ENCODE measurements at regions of chr20 and their contacts with region 1.

Region 1: GRCh38 chr20:40689943-40690835 is 1.2 kb upstream of the MAFB start:
- DNase-seq: peak; percentile 95
- H3K4me3 ChIP-seq: peak overlapping the region; percentile 52 to 87 (median 64)
- H3K27ac ChIP-seq: peak overlapping the region; percentile 38 to 94 (median 90)
- H3K4me1 ChIP-seq: peaks cover 0 to 63% (median 41%) of the 10 kb centered on the region in 6 donors
- H3K27me3 ChIP-seq: peaks cover 0 to 100% (median 62%) of the 10 kb centered on the region in 7 donors
- CTCF ChIP-seq: peak; percentile 77 to 98 (median 90)
- POLR2A ChIP-seq: peak in 1 of 3 donors; percentile 20

Region 2: GRCh38 chr20:40265825-40266533 is 424.2 kb before region 1 on chr20:
- intact Hi-C with region 1: loop called (anchors 10 kb)
- DNase-seq: no peak
- H3K4me3 ChIP-seq: no peak overlapping the region
- H3K27ac ChIP-seq: no peak overlapping the region
- H3K4me1 ChIP-seq: peaks cover 0 to 21% (median 12%) of the 10 kb centered on the region in 6 donors
- H3K27me3 ChIP-seq: no peaks in the 10 kb centered on the region
- CTCF ChIP-seq: peak in 7 of 11 experiments; percentile 8 to 58 (median 38)
- POLR2A ChIP-seq: no peak

Region 3: GRCh38 chr20:40646361-40646760 is 43.8 kb before region 1 on chr20:
- intact Hi-C with region 1: loop called (anchors 5 kb)
- DNase-seq: no peak
- H3K4me3 ChIP-seq: peak overlapping the region in 1 of 8 donors; percentile 19
- H3K27ac ChIP-seq: peak overlapping the region in 7 of 8 donors; percentile 8 to 77 (median 75)
- H3K4me1 ChIP-seq: peaks cover 14 to 83% (median 71%) of the 10 kb centered on the region in 6 donors
- H3K27me3 ChIP-seq: peaks cover 0 to 7% (median 0%) of the 10 kb centered on the region in 7 donors
- CTCF ChIP-seq: no peak
- POLR2A ChIP-seq: no peak